PC-9 (cell line): ENCODE measurements at regions of chr1 and their contacts with region 1.

Region 1: GRCh38 chr1:110152133-110152785 is 2.0 kb downstream of the SLC6A17 start:
- DNase-seq: peak in 1 of 2 experiments; percentile 63
- H3K4me3 ChIP-seq: no peak overlapping the region
- H3K27ac ChIP-seq: no peak overlapping the region
- H3K4me1 ChIP-seq: peaks cover 14% of the 10 kb centered on the region
- H3K27me3 ChIP-seq: 0 out of 2 replicates have a peak, but pooled peaks cover 3% of the 10 kb centered on the region
- CTCF ChIP-seq: no peak

Region 2: DNA sequence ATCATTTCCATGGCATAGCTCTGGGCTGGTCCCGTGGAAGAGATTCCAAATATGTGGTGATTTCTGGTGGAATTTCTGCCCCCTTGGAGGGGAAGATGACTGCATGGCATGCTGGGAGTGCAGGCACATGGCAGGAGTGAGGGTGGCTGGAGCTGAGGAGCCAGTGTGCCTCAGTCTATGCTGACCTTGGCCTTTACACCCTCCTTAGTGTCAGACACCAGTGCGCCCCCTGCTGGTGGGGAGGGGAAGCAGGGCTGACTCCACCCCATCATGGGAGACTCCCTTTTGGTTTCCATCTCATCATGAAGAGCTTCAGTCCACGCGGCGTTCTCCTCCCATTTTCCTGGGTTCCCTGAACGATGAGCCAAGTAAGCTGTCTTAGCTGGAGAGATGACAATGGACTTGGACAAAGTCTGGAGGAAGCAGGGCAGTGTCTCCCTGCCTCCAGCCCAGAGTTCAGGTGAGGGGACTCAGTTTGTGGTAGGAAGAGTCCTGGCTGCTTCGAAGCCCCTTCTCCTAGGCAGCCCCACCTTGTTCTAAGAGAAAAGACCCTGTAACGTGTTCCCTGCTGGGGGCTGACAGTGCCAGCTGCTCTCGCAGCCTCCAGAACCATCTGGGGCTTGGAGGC is 92.1 kb before region 1 on chr1:
- CTCF ChIA-PET with region 1: interaction called, 10 read pairs
- POLR2A ChIA-PET with region 1: no interaction called
- intact Hi-C with region 1: no loop called
- DNase-seq: peak in 1 of 2 experiments; percentile 28
- H3K4me3 ChIP-seq: no peak overlapping the region
- H3K27ac ChIP-seq: no peak overlapping the region
- H3K4me1 ChIP-seq: peaks cover 16% of the 10 kb centered on the region; the same call in 1 of the 2 replicates
- H3K27me3 ChIP-seq: no peaks in the 10 kb centered on the region
- CTCF ChIP-seq: peak; percentile 96

Region 3: DNA sequence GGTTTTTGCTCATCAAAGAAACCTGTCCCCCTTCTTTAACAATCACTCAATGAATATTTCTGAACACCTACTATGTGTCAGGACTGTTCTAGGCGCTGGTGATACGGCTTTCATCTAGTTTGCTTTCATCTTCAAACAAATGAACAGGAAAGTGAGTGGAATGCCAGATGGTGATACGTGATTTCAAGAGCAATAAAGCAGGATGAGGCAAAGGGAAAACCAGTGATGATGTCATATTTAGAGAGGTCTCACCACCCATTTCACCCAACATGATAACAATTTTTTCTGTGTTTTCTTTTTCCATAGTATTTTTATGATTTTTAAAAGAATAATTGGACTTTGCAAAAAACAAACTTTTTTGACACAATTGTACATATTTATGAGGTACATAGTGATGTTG is 13.3 kb before region 1 on chr1:
- CTCF ChIA-PET with region 1: no interaction called
- POLR2A ChIA-PET with region 1: no interaction called
- intact Hi-C with region 1: no loop called
- DNase-seq: no peak
- H3K4me3 ChIP-seq: no peak overlapping the region
- H3K27ac ChIP-seq: no peak overlapping the region
- H3K4me1 ChIP-seq: peaks cover 18% of the 10 kb centered on the region
- H3K27me3 ChIP-seq: peaks cover 4% of the 10 kb centered on the region; the same call in 1 of the 2 replicates
- CTCF ChIP-seq: no peak